Ascending aorta (tissue), 2 donors: ENCODE measurements at regions of chr2 and their contacts with region 1.

Region 1: DNA sequence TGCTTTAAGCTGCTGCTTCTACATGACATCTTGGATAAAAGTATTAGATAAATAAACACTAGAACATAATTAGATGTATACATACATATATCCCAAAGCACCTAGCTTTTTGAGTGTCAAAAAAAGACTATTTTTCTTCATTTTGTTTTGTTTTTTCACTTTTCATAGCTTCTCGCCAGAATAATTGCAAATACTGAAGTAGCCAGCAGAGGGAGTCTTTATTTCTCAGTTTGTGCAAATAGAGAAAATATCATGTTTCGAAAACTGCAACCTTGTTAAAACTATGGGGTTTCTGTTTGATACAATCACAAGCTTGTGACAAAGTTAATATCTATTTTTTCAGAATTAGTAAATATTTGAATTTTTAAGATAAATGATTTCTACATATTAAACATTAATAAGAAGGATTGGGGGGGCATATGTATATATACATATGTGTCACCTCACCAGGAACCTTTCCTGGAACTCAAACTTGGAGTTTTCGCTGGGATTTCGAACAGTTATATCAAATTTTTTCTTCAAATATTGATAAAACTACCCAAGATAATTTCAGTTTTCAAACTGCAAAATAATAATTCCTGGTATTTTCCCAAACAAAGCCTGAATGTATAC is 61.0 kb downstream of the GRB14 start:
- DNase-seq: no peak
- H3K4me3 ChIP-seq: peak overlapping the region; percentile 41 to 44
- H3K27ac ChIP-seq: no peak overlapping the region
- H3K4me1 ChIP-seq: peaks cover 0 to 2% of the 10 kb centered on the region in 2 donors
- H3K27me3 ChIP-seq: no peaks in the 10 kb centered on the region
- CTCF ChIP-seq: peak in 2 of 3 experiments; percentile 71 to 72

Region 2: DNA sequence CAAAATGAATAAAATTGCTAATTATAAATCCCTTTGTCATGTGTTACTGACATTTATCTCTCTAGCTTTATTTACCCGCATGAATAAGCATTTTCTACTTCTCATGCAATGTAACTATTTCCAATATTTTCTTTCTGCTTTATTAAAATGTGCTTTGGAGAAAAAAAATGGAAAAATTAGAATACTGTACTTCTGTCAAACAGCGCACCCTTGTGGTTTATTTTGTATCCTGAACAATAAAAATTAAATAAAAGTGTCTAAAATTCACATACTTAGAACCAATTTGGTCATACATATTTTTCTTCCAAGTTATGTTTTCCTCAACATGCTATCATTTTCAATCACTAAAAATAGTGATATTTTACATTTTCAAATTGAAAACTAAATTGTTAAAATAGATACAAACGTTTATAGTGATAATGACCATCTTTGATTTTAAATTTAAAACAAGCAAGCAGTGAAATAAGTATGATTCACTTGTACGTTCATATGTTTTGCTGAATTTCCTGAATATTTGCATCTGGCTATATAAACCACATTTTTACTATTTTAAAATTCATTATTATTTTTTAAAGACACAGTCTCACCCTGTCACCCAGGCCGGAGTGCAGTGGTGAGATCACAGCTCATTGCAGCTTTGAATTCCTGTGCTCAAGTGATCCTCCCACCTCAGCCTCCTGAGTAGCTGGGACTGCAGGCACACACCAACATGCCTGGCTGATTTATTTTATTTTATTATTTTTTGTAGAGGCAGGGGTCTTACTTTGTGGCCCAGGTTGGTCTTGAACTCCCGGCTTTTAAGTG is 156.9 kb after region 1 on chr2:
- intact Hi-C with region 1: loop called (anchors 1 kb)
- DNase-seq: no peak
- H3K4me3 ChIP-seq: no peak overlapping the region
- H3K27ac ChIP-seq: no peak overlapping the region
- H3K4me1 ChIP-seq: peaks cover 0 to 4% of the 10 kb centered on the region in 2 donors
- H3K27me3 ChIP-seq: no peaks in the 10 kb centered on the region
- CTCF ChIP-seq: peak in 2 of 3 experiments; percentile 54 to 58

Region 3: DNA sequence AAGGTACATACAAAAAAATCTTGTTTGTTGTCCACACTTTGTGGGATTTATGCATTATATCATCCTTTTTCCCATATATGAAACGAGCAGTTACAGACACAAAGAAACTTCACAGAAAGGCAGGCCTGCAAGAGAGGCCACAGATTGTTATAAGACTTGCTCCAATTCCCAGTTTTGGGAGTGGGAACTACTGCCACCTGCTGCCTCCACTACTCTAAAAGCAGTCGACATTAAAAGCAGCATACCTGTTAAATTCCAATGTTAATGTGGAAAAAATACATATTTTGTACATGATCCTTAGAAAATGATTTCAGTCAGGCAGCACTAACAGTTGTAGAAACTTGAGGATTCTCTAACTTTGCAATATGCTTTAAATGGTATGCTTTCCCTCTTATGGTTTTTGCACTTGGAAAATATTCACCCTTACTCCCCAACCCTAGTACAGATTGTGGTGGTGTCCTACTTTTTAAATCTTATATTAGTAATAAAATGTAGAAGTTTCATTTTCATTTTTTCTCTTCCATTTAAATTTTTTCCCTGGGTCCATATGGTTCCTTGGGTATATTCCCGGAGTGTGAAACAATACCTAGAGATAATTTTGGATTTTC is 357.1 kb after region 1 on chr2:
- intact Hi-C with region 1: loop called (anchors 5 kb)
- DNase-seq: peak in 1 of 2 donors; percentile 69
- H3K4me3 ChIP-seq: no peak overlapping the region
- H3K27ac ChIP-seq: no peak overlapping the region
- H3K4me1 ChIP-seq: peaks cover 0 to 4% of the 10 kb centered on the region in 2 donors
- H3K27me3 ChIP-seq: no peaks in the 10 kb centered on the region
- CTCF ChIP-seq: peak; percentile 29 to 65 (median 41)